ENCODE measurements at regions of chr14 and their contacts with region 1.

Region 1: DNA sequence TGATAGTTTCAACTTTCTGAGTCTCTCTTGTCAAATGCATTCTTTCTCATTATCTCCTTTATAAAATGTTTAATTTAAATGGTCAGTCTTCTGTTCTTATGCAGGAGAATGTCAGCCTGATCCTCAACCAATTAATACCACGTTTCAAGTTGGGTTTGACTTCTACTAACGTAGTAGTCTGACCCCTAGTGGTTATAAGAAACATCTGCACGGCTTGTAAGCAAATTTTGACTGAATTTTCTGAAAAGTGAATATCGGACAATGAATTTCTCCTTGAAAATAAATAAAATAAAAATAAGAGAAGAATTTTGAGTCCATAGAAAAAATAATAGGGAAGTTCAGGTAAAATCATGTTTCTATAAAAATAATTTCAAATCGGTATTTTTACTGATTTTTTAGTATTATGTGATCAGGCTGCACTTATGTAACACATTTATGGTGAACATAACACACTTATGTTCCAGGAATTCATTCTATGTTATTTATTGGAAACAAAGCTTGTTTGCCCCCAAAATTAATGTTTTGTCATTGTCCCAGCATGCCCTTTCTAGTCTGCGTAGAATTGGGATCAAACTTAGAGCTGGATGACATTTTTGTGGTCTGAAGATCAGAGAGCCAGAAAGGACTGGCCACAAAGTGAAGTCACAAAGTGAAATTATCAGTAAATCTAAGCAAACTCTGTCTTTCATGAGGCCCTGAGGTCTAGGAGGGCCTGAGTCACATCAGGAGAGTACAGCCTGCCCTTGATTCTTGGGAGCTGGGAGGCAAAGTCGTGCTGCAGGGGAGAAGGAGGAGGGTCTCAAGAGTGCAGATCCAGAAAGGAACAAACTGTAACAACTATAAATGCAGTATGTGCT is 101.2 kb upstream of the STXBP6 start:
- DNase-seq: no peak
- H3K4me3 Mint-ChIP-seq: no peak overlapping the region
- H3K27ac Mint-ChIP-seq: no peak overlapping the region
- H3K4me1 Mint-ChIP-seq: no peaks in the 10 kb centered on the region
- H3K27me3 Mint-ChIP-seq: peaks cover 8% of the 10 kb centered on the region

Region 2: DNA sequence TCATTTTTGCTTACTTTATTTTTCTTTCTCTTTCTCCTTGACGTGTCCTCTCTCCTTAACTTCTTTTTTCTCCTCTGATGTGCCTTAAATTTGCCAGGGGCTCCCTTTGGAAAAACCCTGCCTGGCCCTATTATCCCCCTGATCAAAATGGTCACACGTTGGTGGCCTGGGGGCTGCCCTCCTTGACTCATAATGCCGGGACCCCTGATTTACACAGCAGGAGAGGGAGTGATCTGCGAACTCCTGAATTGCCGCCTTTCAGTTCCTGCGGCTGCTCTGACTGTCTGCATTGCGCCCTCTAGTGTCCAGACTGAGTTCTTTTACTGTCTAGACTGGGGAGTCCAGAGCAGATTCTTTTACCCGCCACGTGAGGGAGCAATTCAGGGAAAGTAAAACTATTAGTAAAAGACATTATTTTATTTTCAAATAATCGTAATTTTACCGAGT is 472.3 kb before region 1 on chr14:
- CTCF ChIA-PET with region 1: no interaction called
- intact Hi-C with region 1: loop called (anchors 1 kb)
- DNase-seq: peak; percentile 89
- H3K4me3 Mint-ChIP-seq: peak overlapping the region; percentile 70
- H3K27ac Mint-ChIP-seq: peak overlapping the region; percentile 88
- H3K4me1 Mint-ChIP-seq: peaks cover 59% of the 10 kb centered on the region
- H3K27me3 Mint-ChIP-seq: no peaks in the 10 kb centered on the region

Region 3: GRCh38 chr14:24734878-24735500 is 416.2 kb before region 1 on chr14:
- CTCF ChIA-PET with region 1: no interaction called
- intact Hi-C with region 1: loop called (anchors 5 kb)
- DNase-seq: peak; percentile 45
- H3K4me3 Mint-ChIP-seq: no peak overlapping the region
- H3K27ac Mint-ChIP-seq: no peak overlapping the region
- H3K4me1 Mint-ChIP-seq: no peaks in the 10 kb centered on the region
- H3K27me3 Mint-ChIP-seq: peaks cover 7% of the 10 kb centered on the region

Region 4: DNA sequence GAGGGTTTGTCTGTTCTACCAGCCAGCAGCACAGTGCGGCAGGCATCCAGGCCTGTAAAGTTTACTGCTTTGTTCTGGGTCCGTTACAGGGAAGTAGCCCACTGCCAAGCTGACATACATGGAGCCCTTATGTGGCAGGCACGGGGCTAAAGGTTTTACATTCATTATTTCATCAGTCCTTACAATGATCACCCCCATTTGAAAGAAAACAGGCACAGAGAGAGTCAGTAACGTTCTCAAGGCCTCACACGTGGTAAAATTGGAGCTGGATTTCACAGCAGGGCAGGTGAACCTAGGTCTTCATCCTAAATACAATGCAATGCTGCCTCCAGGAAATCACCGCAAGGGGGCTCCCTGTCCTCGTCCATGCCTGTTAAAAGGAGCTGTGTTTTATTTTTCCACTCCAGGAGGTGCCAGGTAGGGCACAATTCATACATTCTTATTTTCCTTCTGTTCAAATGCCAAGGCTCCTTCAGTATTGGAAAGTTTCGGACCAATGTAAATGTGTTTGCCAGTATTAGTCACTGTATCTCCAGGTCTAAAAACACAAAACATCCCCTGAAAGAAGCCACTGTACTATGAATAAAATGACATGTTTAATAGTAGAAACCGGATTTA is 345.0 kb before region 1 on chr14:
- CTCF ChIA-PET with region 1: no interaction called
- intact Hi-C with region 1: loop called (anchors 2 kb)
- DNase-seq: peak; percentile 68
- H3K4me3 Mint-ChIP-seq: no peak overlapping the region
- H3K27ac Mint-ChIP-seq: no peak overlapping the region
- H3K4me1 Mint-ChIP-seq: no peaks in the 10 kb centered on the region
- H3K27me3 Mint-ChIP-seq: peaks cover 7% of the 10 kb centered on the region

Region 5: DNA sequence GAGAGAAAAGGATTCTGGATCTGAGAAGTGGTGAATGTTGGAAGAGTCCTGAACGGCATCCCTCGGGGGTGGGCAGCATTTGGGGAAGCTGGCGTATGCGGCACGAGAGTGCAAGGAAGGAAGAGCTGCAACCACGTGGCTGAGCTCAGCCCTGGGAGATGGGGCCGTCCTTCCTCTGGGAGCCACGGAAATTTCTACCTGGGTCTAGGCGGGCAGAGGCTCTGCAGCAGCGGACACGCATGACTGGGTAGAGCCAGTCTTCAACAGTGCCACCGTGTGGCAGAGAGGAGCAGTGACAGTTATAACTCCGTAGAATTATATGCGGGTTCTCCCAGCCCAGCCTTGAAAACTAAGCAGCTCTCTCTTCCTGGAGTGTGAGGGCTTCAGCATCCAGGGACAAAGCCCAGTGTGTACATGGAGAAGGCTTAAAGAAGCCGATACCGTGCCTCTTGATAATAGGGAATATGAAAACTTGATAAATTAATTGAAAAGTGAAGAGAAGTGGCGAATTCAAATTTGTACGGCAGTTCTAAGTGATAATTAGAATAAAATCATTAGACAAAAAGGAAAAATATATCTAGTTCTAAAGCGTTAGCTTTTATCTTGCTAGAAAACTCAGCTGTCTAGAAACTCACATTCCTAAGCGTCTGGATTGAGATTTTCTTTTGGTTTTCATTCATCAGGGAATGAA is 18.3 kb before region 1 on chr14:
- CTCF ChIA-PET with region 1: interaction called, 10 read pairs
- intact Hi-C with region 1: no loop called
- DNase-seq: peak; percentile 60
- H3K4me3 Mint-ChIP-seq: no peak overlapping the region
- H3K27ac Mint-ChIP-seq: peak overlapping the region; percentile 48
- H3K4me1 Mint-ChIP-seq: peaks cover 3% of the 10 kb centered on the region
- H3K27me3 Mint-ChIP-seq: peaks cover 28% of the 10 kb centered on the region

Region 6: DNA sequence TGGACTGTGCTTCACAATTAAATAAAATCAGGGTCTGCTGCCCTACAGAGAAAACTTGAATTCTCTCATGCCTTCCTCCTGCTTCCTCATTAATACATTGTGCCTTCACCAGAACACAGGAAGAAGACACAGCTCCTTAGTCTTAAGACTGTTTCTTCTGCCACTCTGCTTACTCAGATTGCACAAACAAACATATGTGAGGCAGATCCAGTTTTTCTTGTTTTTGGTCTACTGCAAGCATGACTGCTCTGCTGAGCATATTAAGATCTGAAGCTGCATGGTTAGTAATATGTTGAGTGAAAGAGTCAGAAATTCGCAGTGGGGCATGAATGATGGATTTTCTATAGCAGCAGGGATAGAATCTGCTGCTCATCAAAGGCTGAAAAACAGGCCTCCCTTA is 219.9 kb after region 1 on chr14:
- CTCF ChIA-PET with region 1: no interaction called
- intact Hi-C with region 1: no loop called
- DNase-seq: no peak
- H3K4me3 Mint-ChIP-seq: no peak overlapping the region
- H3K27ac Mint-ChIP-seq: no peak overlapping the region
- H3K4me1 Mint-ChIP-seq: no peaks in the 10 kb centered on the region
- H3K27me3 Mint-ChIP-seq: no peaks in the 10 kb centered on the region

Region 7: DNA sequence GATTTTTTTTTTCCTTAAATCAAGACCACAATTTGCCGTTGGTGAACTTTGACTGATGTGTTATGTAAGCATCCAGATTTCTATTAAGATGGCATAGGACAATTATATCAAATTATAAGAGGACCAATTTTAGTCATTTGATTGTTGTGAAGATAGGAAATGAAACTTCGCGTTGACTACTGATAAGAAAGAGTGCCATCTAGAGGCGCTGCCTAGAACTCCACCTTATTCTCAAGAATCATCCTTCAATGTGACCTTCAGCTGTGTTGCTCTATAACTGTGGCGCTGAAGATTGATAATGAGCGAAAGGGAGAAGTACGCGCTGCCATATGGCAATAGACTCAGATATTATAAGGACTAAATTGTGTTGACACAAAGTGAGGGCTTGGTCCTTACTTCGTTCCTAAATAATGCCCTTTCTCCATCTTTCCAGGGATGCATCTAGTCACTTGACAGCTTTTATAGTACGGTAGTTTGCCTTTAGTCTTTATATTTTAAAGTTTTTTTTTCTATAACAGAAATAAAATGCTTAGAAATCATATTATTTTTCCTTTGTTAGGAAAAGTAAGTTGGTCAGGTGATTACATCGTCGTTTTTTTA is 249.5 kb after region 1 on chr14:
- CTCF ChIA-PET with region 1: interaction called, 3 read pairs
- intact Hi-C with region 1: loop called (anchors 10 kb)
- DNase-seq: peak; percentile 60
- H3K4me3 Mint-ChIP-seq: no peak overlapping the region
- H3K27ac Mint-ChIP-seq: no peak overlapping the region
- H3K4me1 Mint-ChIP-seq: peaks cover 2% of the 10 kb centered on the region
- H3K27me3 Mint-ChIP-seq: peaks cover 2% of the 10 kb centered on the region

Measured in activated naive CD4-positive, alpha-beta T cell treated with anti-CD3 and anti-CD28 coated beads for 36 hours (primary cell).